ENCODE measurements at regions of chr15 and their contacts with region 1.

Region 1: DNA sequence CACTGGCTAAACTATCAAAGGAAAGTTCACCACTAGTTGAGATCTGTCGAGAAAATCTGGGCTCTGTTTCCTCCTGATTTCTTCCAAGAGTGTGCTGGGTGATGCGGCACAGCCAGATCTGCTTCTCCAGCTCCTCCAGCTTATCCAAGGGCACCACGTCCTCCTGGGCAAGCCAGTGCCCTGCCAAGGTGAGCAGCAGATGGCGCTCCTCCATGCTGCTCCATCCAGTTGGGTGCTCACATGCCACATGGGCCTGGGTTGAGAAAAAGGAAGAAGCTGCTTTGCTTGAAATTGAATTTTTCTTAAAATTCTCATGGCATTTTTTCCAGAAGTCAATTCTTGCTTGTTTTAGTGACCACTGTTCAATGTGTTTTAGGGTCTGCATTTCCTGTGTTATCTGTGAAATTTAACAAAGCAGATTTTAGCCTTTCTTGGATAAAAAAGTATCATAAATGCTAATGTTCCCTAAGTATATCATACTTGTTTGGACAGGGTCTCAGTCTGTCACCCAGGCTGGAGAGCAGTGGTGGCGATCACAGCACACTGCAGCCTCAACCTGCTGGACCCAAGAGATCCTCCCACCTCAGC is 47.3 kb downstream of the EIF3J start:
- DNase-seq: peak; percentile 37
- CTCF ChIP-seq: peak; percentile 51

Region 2: GRCh38 chr15:44545913-44546802 is 38.1 kb before region 1 on chr15:
- CTCF ChIA-PET with region 1: interaction called, 22 read pairs
- POLR2A ChIA-PET with region 1: no interaction called
- DNase-seq: peak; percentile 45
- CTCF ChIP-seq: peak; percentile 46

Region 3: GRCh38 chr15:44570361-44570760 is 13.9 kb before region 1 on chr15:
- CTCF ChIA-PET with region 1: interaction called, 18 read pairs
- POLR2A ChIA-PET with region 1: no interaction called
- DNase-seq: no peak
- CTCF ChIP-seq: no peak

Region 4: DNA sequence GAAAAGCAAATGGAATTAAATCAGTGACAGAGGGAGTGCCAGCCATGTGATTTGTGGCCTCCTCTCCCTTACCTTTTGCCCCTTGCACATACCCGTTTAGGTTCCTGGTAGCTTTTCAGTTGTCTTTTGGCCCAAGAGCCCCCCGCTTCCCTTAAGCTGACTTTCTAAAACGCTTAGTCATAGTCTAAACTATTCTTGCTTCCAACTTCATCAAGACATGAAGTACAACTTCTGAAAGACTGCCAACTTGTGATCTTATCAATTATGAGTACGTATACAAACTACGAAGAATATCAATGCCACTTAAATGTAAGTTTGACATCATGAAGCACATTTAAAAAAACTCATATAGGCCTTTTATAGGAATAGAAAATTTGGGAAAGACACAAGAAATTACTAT is 14.6 kb after region 1 on chr15:
- CTCF ChIA-PET with region 1: interaction called, 22 read pairs
- POLR2A ChIA-PET with region 1: interaction called, 3 read pairs
- DNase-seq: no peak
- CTCF ChIP-seq: no peak